CD8-positive, alpha-beta T cell (primary cell): ENCODE measurements at regions of chr6 and their contacts with region 1.

Region 1: GRCh38 chr6:94300424-94301144 is 881.2 kb upstream of the EPHA7 start:
- DNase-seq: no peak
- ATAC-seq: no peak
- H3K4me3 ChIP-seq: no peak overlapping the region
- H3K4me3 Mint-ChIP-seq: no peak overlapping the region
- H3K27ac ChIP-seq: no peak overlapping the region
- H3K27ac Mint-ChIP-seq: no peak overlapping the region
- H3K4me1 ChIP-seq: no peaks in the 10 kb centered on the region
- H3K4me1 Mint-ChIP-seq: no peaks in the 10 kb centered on the region
- H3K27me3 ChIP-seq: no peaks in the 10 kb centered on the region
- H3K27me3 Mint-ChIP-seq: no peaks in the 10 kb centered on the region
- CTCF ChIP-seq: no peak

Region 2: DNA sequence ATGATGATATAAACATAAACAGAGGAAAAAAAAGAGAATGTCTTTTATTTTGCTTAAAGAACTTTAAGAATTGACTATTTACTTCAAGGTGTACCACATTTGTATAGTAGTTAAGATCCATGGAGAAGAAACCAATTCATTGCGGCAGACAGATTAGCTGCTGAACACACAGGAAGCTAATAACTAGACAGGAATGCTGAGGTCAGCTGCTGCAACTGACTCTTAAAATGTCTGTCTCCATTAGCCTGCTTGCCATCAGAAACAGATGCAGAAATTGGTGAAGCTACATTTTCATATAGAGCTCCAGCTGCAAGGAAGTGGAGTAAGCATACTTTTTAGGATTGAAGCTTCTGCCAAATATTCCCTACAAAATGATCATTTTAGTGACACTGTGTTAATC is 1820.8 kb before region 1 on chr6:
- CTCF ChIA-PET with region 1: no interaction called
- POLR2A ChIA-PET with region 1: no interaction called
- intact Hi-C with region 1: no loop called
- DNase-seq: no peak
- ATAC-seq: no peak
- H3K4me3 ChIP-seq: no peak overlapping the region
- H3K4me3 Mint-ChIP-seq: no peak overlapping the region
- H3K27ac ChIP-seq: no peak overlapping the region
- H3K27ac Mint-ChIP-seq: no peak overlapping the region
- H3K4me1 ChIP-seq: no peaks in the 10 kb centered on the region
- H3K4me1 Mint-ChIP-seq: no peaks in the 10 kb centered on the region
- H3K27me3 ChIP-seq: no peaks in the 10 kb centered on the region
- H3K27me3 Mint-ChIP-seq: no peaks in the 10 kb centered on the region
- CTCF ChIP-seq: no peak

Region 3: GRCh38 chr6:94270091-94270948 is 30.3 kb before region 1 on chr6:
- CTCF ChIA-PET with region 1: no interaction called
- POLR2A ChIA-PET with region 1: no interaction called
- intact Hi-C with region 1: loop called in 1 of 2 experiments (anchors 1 kb)
- DNase-seq: no peak
- ATAC-seq: no peak
- H3K4me3 ChIP-seq: no peak overlapping the region
- H3K4me3 Mint-ChIP-seq: no peak overlapping the region
- H3K27ac ChIP-seq: no peak overlapping the region
- H3K27ac Mint-ChIP-seq: no peak overlapping the region
- H3K4me1 ChIP-seq: no peaks in the 10 kb centered on the region
- H3K4me1 Mint-ChIP-seq: no peaks in the 10 kb centered on the region
- H3K27me3 ChIP-seq: no peaks in the 10 kb centered on the region
- H3K27me3 Mint-ChIP-seq: no peaks in the 10 kb centered on the region
- CTCF ChIP-seq: no peak